Stomach (tissue), 19 donors: ENCODE measurements at regions of chr6 and their contacts with region 1.

Region 1: DNA sequence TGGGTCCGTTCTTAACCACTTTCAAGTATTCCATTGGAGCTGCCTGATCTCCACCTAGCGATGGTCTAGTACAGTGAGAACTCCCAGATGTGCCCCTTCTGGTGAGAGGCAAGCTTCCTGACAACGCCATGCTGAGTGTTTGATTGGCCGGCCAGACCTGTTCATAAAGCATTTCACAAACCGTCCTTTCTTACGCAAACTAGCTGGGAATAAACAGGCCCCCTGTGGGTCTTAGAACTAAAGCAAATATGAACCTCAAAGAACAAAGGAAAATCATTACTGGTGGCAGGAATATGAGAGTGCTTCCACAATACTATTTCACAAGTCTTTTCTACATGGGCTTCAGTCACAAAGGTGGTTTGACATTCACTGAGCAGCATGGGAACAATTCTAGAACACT is 15.6 kb upstream of the GCNT2 start:
- DNase-seq: no peak
- H3K4me3 ChIP-seq: no peak overlapping the region
- H3K27ac ChIP-seq: no peak overlapping the region
- H3K4me1 ChIP-seq: peaks cover 5 to 29% (median 13%) of the 10 kb centered on the region in 4 donors
- H3K27me3 ChIP-seq: peaks cover 0 to 4% (median 0%) of the 10 kb centered on the region in 3 donors
- CTCF ChIP-seq: no peak
- EP300 ChIP-seq: no peak
- POLR2A ChIP-seq: no peak

Region 2: DNA sequence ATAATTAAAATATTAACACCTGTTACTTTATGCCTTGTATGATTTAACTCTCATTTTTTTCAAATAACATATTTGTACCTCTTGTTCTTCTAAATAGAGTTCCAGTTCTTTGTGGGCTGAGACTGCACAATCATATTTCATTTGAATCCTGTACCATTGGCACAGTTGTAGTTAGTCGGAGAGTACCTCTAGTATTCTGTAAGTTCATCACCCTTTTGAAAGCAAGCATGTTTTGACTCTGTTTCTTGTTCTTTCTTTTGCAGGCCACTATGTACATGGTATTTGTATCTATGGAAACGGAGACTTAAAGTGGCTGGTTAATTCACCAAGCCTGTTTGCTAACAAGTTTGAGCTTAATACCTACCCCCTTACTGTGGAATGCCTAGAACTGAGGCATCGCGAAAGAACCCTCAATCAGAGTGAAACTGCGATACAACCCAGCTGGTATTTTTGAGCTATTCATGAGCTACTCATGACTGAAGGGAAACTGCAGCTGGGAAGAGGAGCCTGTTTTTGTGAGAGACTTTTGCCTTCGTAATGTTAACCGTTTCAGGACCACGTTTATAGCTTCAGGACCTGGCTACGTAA is 120.7 kb after region 1 on chr6:
- intact Hi-C with region 1: no loop called
- DNase-seq: peak in 1 of 2 donors; percentile 29
- H3K4me3 ChIP-seq: no peak overlapping the region
- H3K27ac ChIP-seq: no peak overlapping the region
- H3K4me1 ChIP-seq: no peaks in the 10 kb centered on the region
- H3K27me3 ChIP-seq: no peaks in the 10 kb centered on the region
- CTCF ChIP-seq: no peak
- EP300 ChIP-seq: no peak
- POLR2A ChIP-seq: no peak

Region 3: GRCh38 chr6:10694302-10695085 is 189.0 kb after region 1 on chr6 and contains the starts of genes C6orf52 and PAK1IP1:
- intact Hi-C with region 1: loop called (anchors 10 kb)
- DNase-seq: peak; percentile 93 to 98
- H3K4me3 ChIP-seq: peak within 1 kb of the TSS; percentile 68 to 87 (median 82)
- H3K27ac ChIP-seq: peak within 1 kb of the TSS; percentile 75 to 96 (median 95)
- H3K4me1 ChIP-seq: peaks cover 29 to 50% (median 39%) of the 10 kb centered on the region in 4 donors
- H3K27me3 ChIP-seq: no peaks in the 10 kb centered on the region
- CTCF ChIP-seq: peak in 1 of 7 experiments; percentile 24
- EP300 ChIP-seq: no peak
- POLR2A ChIP-seq: peak in 2 of 4 donors; percentile 84 to 89
- total RNA-seq, gene C6orf52: 3.2 TPM in 1 of 5 donors, not detected in the others
- total RNA-seq, gene PAK1IP1: 1.3 to 12.3 (median 5.7) TPM in 4 of 5 donors, not detected in the other

Region 4: DNA sequence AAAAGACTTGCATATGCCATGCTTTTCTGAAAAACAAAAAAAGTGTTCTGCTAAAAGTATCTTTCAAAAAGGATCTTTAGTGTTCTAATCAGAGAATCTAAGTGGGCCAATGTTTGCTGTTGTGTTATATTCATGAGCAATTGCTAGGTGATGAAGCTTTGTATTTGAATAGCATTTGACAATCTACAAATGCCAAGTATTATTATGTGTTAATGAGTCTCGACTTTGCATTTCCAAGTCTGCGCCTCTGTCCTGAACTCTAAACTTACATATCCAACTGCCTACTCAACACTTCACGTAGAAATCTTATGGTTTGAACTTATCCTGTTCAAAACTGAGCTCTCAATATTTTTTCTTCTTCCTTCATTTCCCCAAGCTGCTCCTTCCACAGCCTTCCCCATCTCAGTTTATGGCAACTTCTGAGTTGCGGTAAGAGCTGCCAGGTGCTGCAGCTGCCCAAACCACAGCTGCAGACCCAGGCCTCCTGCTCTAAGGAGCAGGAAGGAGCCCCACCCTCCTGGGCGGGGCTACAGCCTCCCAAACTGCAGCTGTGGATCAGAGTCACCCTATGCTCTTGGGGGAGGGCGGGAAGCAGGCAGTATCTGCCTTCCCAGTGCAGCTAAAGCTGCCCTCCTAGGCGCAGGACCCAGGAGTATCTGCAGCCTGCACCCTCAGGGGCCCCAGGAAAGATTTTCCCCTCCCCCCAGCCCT is 349.5 kb after region 1 on chr6:
- intact Hi-C with region 1: no loop called
- DNase-seq: no peak
- H3K4me3 ChIP-seq: no peak overlapping the region
- H3K27ac ChIP-seq: no peak overlapping the region
- H3K4me1 ChIP-seq: no peaks in the 10 kb centered on the region
- H3K27me3 ChIP-seq: no peaks in the 10 kb centered on the region
- CTCF ChIP-seq: no peak
- EP300 ChIP-seq: no peak
- POLR2A ChIP-seq: no peak

Region 5: DNA sequence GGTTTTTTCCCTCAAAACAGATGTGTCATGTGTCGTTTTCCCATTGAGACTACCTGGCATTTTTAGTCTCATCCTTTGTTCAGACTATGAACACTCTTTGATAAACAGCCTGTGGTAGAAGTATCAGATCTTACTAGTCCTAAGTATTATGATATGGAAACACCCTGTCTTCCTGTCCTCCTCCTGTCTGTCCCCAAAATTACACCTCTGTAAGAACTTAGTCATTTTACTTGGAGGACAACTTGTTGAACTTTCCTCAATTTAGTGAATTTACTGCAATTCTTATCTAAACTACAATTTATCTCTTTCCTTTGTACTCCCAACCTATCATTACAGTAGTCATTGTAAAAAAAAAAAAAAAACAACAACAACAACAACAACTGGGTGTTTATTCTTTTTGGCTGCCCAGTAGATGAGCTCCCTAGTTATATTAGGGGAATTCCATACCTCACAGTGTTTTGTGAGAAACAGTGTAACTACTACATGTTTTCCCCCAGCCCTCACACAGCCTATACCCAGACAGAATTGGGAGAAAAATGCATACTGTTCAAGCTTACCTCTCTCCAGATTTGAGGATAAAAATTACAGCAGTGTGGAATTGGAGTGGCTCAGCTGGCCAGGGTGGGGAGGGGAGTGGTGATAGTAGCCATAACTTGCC is 624.5 kb after region 1 on chr6:
- intact Hi-C with region 1: no loop called
- DNase-seq: no peak
- H3K4me3 ChIP-seq: no peak overlapping the region
- H3K27ac ChIP-seq: no peak overlapping the region
- H3K4me1 ChIP-seq: no peaks in the 10 kb centered on the region
- H3K27me3 ChIP-seq: no peaks in the 10 kb centered on the region
- CTCF ChIP-seq: no peak
- EP300 ChIP-seq: no peak
- POLR2A ChIP-seq: no peak